Posterior vena cava (tissue), 2 donors: ENCODE measurements at regions of chr15 and their contacts with region 1.

Region 1: DNA sequence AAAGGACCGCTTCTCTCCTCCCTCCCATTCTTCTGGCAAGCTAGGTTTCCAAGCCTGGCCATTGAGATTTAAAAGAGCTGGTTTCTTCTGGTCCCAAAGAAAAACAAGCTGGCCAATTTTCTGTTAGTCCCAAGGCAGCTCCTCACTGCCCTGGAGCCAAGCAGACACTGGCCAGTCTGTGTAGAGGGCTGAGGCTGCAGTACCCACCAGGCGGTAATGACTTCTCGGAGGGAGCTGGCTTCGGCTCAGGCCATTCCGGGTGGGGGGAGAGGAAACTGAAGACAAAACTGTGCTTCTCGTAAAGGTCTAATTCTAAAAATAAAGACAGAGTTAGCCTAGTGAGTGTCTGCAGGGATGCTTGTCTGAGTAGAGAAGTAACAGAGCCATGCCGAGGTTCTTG is 78.5 kb upstream of the SMAD3 start:
- DNase-seq: no peak

Region 2: DNA sequence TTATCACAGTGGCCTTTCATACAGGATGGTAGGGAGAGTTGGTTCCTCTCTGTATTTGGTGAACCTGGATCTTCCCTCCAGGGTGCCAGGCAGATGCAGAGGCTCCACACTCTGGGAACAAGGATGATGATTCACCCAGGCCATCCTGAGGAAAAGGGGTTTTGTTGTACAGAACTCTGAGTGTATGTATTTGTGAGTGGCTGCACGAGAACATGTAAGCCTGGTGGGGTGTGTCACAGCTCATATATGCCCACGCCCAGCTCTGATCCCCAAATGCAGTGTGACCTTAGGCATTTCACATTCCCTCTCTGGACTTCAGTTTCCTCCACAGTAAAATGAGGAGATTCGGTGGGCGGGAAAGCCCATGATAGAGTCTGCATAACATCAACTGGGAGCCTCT is 1764.1 kb before region 1 on chr15:
- intact Hi-C with region 1: loop called in 1 of 2 experiments (anchors 5 kb)
- DNase-seq: no peak

Region 3: GRCh38 chr15:66907826-66908743 is 78.9 kb before region 1 on chr15:
- intact Hi-C with region 1: no loop called
- DNase-seq: peak; percentile 85

Region 4: GRCh38 chr15:67331676-67332075 is 344.7 kb after region 1 on chr15:
- intact Hi-C with region 1: no loop called
- DNase-seq: no peak